Mammary epithelial cell (primary cell): ENCODE measurements at regions of chr22 and their contacts with region 1.

Region 1: GRCh38 chr22:24165673-24166072 is 15.6 kb upstream of the SUSD2 start:
- DNase-seq: peak; percentile 62
- H3K4me3 ChIP-seq: no peak overlapping the region
- H3K27ac ChIP-seq: no peak overlapping the region
- H3K4me1 ChIP-seq: peaks cover 3% of the 10 kb centered on the region
- H3K27me3 ChIP-seq: no peaks in the 10 kb centered on the region
- CTCF ChIP-seq: no peak

Region 2: DNA sequence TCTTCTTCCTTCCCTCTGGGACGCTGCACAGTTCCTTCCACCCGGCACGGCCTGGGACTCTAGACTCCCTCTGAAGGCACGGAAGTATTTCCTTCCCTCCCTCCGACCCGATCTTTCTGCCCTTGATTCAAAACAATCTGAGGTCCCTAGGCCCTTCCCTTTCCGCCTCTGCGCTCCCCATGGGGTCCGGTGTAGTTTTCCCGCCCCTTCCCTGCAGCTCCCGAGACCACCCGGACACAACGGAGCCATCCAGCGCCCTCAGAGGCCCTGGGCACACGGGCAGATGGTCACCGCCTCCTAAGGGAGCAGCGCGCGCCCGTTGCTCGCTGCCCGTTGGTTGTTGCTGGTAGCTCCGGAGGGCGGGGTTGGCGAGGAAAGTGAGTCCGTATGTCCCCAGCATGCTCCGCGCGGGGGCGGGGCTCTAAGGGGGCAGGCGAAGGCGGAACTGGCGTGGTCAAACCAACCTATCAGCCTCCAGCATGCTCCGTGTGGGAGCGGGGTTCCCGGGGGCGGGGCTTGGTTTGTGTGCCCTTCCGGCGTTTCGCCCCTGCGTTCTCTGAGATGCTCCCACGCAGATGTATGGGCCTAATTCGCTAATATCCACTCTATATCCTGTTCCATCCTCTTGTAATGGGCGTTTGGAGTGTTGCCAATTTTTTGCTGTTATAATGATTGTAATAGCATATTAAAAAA is 251.9 kb before region 1 on chr22:
- CTCF ChIA-PET with region 1: no interaction called
- dilution Hi-C with region 1: loop called (anchors 5 kb)
- in situ Hi-C with region 1: no loop called
- intact Hi-C with region 1: no loop called
- DNase-seq: peak; percentile 98
- H3K4me3 ChIP-seq: peak overlapping the region; percentile 61 to 71 (median 69)
- H3K27ac ChIP-seq: peak overlapping the region; percentile 81
- H3K4me1 ChIP-seq: peaks cover 4% of the 10 kb centered on the region
- H3K27me3 ChIP-seq: no peaks in the 10 kb centered on the region
- CTCF ChIP-seq: no peak

Region 3: GRCh38 chr22:24106385-24107381 is 59.0 kb before region 1 on chr22:
- CTCF ChIA-PET with region 1: no interaction called
- dilution Hi-C with region 1: loop called (anchors 5 kb)
- in situ Hi-C with region 1: no loop called
- intact Hi-C with region 1: no loop called
- DNase-seq: no peak
- H3K4me3 ChIP-seq: no peak overlapping the region
- H3K27ac ChIP-seq: no peak overlapping the region
- H3K4me1 ChIP-seq: no peaks in the 10 kb centered on the region
- H3K27me3 ChIP-seq: no peaks in the 10 kb centered on the region
- CTCF ChIP-seq: no peak

Region 4: DNA sequence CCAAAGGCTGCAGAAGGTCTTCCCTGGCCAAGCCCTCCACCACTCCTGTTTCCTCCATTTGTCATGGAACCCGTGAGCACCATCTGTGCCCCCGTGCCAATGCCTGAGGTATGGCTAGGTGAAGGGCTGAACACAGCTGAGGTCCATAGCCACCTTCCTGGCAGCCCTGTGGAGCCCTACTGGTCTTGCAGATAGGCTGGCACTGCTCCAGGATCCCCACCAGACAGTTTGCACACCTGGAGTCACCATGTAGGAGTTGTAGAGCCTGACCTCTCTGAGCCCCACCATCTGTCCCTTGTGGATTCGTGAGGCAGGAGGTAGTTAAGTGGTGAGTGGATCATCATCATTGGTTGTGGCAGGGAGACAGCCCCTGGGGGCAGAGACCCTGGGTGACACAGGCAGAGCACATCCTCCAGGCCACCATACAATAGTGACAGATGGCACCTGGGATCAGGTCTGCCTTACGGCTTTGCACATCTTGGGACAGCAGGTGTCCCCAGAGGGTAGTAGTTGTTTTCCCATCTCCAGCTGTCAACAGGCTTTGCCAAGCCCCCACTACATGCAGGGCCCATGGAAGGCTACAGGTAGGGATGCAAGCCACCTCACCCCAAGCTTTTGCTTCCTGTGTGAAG is 36.9 kb before region 1 on chr22:
- CTCF ChIA-PET with region 1: no interaction called
- dilution Hi-C with region 1: loop called (anchors 5 kb)
- in situ Hi-C with region 1: no loop called
- intact Hi-C with region 1: no loop called
- DNase-seq: no peak
- H3K4me3 ChIP-seq: no peak overlapping the region
- H3K27ac ChIP-seq: no peak overlapping the region
- H3K4me1 ChIP-seq: no peaks in the 10 kb centered on the region
- H3K27me3 ChIP-seq: no peaks in the 10 kb centered on the region
- CTCF ChIP-seq: no peak

Region 5: GRCh38 chr22:24214467-24215285 is 49.0 kb after region 1 on chr22:
- CTCF ChIA-PET with region 1: no interaction called
- dilution Hi-C with region 1: loop called (anchors 5 kb)
- in situ Hi-C with region 1: no loop called
- intact Hi-C with region 1: no loop called
- DNase-seq: no peak
- H3K4me3 ChIP-seq: no peak overlapping the region
- H3K27ac ChIP-seq: no peak overlapping the region
- H3K4me1 ChIP-seq: no peaks in the 10 kb centered on the region
- H3K27me3 ChIP-seq: no peaks in the 10 kb centered on the region
- CTCF ChIP-seq: no peak

Region 6: DNA sequence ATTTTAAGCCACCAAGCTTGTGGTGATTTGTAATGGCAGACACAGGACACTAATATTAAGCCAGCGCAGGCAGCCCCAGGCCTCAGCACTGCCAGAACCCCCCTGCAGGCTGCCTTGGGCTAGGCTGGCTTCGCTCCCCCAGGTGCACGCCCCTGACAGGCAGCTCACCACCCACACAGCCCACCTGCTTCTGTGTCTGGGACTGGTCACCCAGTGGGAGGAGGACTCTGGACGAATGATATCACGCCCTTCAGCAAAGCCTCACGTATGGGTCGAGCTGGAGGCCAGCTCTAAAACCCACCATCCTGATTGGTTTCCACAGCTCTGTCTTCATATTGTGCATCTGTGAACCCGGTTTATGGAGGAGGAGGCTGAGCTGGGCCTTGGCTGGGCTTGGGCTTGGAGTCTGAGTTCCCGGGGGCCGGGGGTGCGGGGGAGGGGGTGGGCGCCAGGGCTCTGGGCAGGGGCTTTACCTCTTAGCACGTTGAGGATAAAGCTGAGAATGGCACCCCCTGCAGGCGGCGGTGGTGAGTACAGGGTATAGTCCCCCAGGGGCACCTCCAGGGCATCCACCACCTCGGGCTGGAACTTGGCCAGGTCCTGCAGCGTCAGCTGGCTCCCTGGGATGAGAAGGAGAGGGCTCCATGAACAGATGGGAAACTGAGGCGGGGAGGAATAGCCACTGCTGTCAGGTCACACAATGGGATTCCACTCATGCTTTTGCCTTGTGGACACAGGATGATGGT is 65.4 kb after region 1 on chr22:
- CTCF ChIA-PET with region 1: no interaction called
- dilution Hi-C with region 1: no loop called
- in situ Hi-C with region 1: no loop called
- intact Hi-C with region 1: no loop called
- DNase-seq: no peak
- H3K4me3 ChIP-seq: no peak overlapping the region
- H3K27ac ChIP-seq: no peak overlapping the region
- H3K4me1 ChIP-seq: no peaks in the 10 kb centered on the region
- H3K27me3 ChIP-seq: no peaks in the 10 kb centered on the region
- CTCF ChIP-seq: peak; percentile 7 to 22